CD8-positive, alpha-beta T cell (primary cell): ENCODE measurements at regions of chr21 and their contacts with region 1.

Region 1: DNA sequence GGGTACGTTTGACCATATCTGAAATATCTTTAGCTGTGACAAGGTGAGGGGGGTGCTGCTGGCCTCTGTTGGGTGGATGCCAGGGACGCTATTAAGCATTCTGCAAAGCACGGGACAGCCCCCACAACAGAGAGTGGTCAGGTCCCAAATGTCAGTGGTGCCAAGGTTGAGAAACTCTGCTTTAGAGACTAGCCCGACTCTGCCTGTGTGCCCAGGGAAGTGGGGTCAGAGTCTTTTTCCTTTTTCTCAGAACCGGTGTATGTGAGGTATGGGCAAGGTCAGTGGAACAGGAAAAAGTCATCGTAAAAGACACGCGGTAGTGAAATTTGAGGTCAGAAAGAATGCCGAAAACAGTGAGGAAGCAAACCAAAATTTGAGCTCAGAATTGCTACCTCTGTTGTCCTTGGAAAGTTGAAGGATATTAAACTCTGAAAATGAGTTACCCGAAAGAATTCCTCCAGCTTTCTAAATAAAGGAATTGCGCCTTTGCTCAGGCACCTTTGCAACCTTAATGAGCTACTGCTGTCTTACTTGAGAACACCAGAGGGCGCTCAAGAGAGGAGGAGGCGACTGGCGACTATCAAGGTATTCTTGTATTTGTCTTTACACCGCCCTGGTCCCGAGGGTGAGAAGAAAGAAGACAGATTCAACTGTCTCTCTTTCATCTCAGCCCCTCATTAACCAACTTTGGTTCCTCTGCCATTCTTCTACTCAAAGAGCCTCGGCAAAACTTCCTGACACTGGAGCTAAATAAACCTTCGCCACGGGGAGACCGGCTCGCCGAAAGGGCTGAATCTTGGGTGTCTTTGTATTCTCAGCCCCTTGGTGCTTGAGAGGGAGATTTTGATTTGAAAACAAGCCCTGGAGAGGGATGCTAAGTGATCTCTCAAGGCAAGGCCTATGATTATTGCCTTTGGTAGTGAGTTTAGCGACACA is 85.4 kb upstream of the OLIG2 start:
- DNase-seq: peak in 8 of 9 experiments; percentile 15 to 75 (median 44)
- ATAC-seq: peak; percentile 54
- H3K4me3 ChIP-seq: no peak overlapping the region
- H3K4me3 Mint-ChIP-seq: no peak overlapping the region
- H3K27ac ChIP-seq: no peak overlapping the region
- H3K27ac Mint-ChIP-seq: no peak overlapping the region
- H3K4me1 ChIP-seq: no peaks in the 10 kb centered on the region
- H3K4me1 Mint-ChIP-seq: peaks cover 3% of the 10 kb centered on the region
- H3K27me3 ChIP-seq: no peaks in the 10 kb centered on the region
- H3K27me3 Mint-ChIP-seq: no peaks in the 10 kb centered on the region
- CTCF ChIP-seq: peak; percentile 74

Region 2: DNA sequence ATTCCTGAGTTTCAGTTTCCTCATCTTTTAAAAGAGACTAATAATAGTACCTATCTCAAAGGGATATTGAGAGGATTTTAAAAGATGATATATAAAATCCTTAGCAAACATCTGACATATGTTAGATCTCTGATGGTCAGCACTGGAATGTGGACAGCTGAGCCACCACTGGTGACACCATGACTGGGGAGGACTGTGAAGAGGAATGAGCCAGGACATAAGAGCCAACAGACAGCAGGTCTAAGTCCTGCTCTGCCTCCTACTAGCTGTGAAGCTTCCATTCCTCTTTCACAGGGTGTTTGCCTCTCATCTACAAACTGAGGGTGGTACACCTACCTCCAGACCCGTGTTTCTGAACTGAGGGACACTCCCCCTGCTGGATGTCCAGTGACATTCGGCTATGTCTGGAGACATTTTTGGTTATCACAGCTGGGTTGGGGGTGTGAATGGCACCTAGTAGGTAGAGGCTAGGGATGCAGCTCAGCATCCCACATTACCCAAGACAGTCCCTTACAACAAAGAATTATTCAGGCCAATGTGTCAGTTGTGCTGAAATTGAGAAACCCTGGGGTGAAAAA is 23.7 kb before region 1 on chr21:
- CTCF ChIA-PET with region 1: interaction called, 14 read pairs
- POLR2A ChIA-PET with region 1: no interaction called
- intact Hi-C with region 1: no loop called
- DNase-seq: peak in 2 of 9 experiments; percentile 17 to 21
- ATAC-seq: no peak
- H3K4me3 ChIP-seq: no peak overlapping the region
- H3K4me3 Mint-ChIP-seq: no peak overlapping the region
- H3K27ac ChIP-seq: no peak overlapping the region
- H3K27ac Mint-ChIP-seq: no peak overlapping the region
- H3K4me1 ChIP-seq: peaks cover 23% of the 10 kb centered on the region
- H3K4me1 Mint-ChIP-seq: peaks cover 36% of the 10 kb centered on the region
- H3K27me3 ChIP-seq: no peaks in the 10 kb centered on the region
- H3K27me3 Mint-ChIP-seq: no peaks in the 10 kb centered on the region
- CTCF ChIP-seq: no peak

Region 3: GRCh38 chr21:32929633-32930038 is 10.7 kb before region 1 on chr21:
- CTCF ChIA-PET with region 1: interaction called, 22 read pairs
- POLR2A ChIA-PET with region 1: no interaction called
- intact Hi-C with region 1: no loop called
- DNase-seq: no peak
- ATAC-seq: no peak
- H3K4me3 ChIP-seq: no peak overlapping the region
- H3K4me3 Mint-ChIP-seq: peak overlapping the region; percentile 8
- H3K27ac ChIP-seq: peak overlapping the region in 1 of 2 experiments; percentile 57
- H3K27ac Mint-ChIP-seq: peak overlapping the region; percentile 7
- H3K4me1 ChIP-seq: peaks cover 34% of the 10 kb centered on the region
- H3K4me1 Mint-ChIP-seq: peaks cover 36% of the 10 kb centered on the region
- H3K27me3 ChIP-seq: no peaks in the 10 kb centered on the region
- H3K27me3 Mint-ChIP-seq: no peaks in the 10 kb centered on the region
- CTCF ChIP-seq: no peak

Region 4: GRCh38 chr21:33127154-33127893 is 187.0 kb after region 1 on chr21:
- CTCF ChIA-PET with region 1: interaction called, 12 read pairs
- POLR2A ChIA-PET with region 1: interaction called, 3 read pairs
- intact Hi-C with region 1: loop called (anchors 1 kb)
- DNase-seq: peak; percentile 10 to 74 (median 61)
- ATAC-seq: peak; percentile 38
- H3K4me3 ChIP-seq: peak overlapping the region; percentile 22 to 32
- H3K4me3 Mint-ChIP-seq: peak overlapping the region; percentile 74
- H3K27ac ChIP-seq: no peak overlapping the region
- H3K27ac Mint-ChIP-seq: no peak overlapping the region
- H3K4me1 ChIP-seq: no peaks in the 10 kb centered on the region
- H3K4me1 Mint-ChIP-seq: peaks cover 9% of the 10 kb centered on the region
- H3K27me3 ChIP-seq: peaks cover 0 to 3% of the 10 kb centered on the region in 2 experiments
- H3K27me3 Mint-ChIP-seq: peaks cover 26% of the 10 kb centered on the region
- CTCF ChIP-seq: peak; percentile 56

Region 5: GRCh38 chr21:33441489-33442477 is 501.4 kb after region 1 on chr21:
- CTCF ChIA-PET with region 1: interaction called, 4 read pairs
- POLR2A ChIA-PET with region 1: no interaction called
- intact Hi-C with region 1: loop called (anchors 1 kb)
- DNase-seq: peak in 1 of 9 experiments; percentile 9
- ATAC-seq: no peak
- H3K4me3 ChIP-seq: no peak overlapping the region
- H3K4me3 Mint-ChIP-seq: no peak overlapping the region
- H3K27ac ChIP-seq: no peak overlapping the region
- H3K27ac Mint-ChIP-seq: peak overlapping the region; percentile 60
- H3K4me1 ChIP-seq: no peaks in the 10 kb centered on the region
- H3K4me1 Mint-ChIP-seq: peaks cover 3% of the 10 kb centered on the region
- H3K27me3 ChIP-seq: no peaks in the 10 kb centered on the region
- H3K27me3 Mint-ChIP-seq: no peaks in the 10 kb centered on the region
- CTCF ChIP-seq: no peak